Endothelial cell of umbilical vein (primary cell): ENCODE measurements at regions of chr13 and their contacts with region 1.

Region 1: GRCh38 chr13:49146950-49147355 is 73.2 kb upstream of the MLNR start:
- DNase-seq: peak; percentile 85
- H3K4me3 ChIP-seq: peak overlapping the region; percentile 10 to 84 (median 79)
- H3K27ac ChIP-seq: peak overlapping the region; percentile 85
- H3K4me1 ChIP-seq: peaks cover 20% of the 10 kb centered on the region
- H3K27me3 ChIP-seq: no peaks in the 10 kb centered on the region
- CTCF ChIP-seq: no peak
- POLR2A ChIP-seq: no peak

Region 2: DNA sequence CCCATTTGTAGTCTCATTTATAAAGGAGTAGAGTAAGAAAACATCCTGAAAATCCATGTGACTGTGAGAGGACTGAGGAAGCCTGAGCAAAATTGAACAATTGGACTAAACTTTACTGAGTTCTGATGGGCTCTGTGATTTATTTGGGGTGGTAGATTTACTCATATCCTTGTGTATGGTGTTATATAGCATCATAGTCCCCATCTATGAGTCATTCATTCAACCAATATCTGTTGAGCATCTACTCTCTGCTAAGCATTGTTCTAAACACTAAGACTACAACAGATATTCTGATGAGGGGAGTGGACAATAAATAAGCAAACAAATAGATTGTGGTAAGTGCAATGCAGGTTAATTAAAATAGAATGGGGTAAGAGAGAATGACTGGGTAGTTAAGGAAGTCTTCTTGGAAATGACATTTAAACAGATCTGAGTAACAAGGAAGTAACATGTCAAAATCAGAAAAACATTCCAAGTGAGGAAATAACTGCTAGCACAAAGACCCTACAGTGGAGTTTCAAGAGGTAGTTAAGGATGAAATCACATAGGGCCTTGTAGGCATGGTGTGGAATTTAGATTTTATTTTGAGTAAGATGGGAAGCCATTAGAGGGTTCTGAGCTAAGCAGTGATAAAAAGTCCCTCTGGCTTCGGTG is 36.8 kb after region 1 on chr13:
- CTCF ChIA-PET with region 1: interaction called, 3 read pairs
- POLR2A ChIA-PET with region 1: no interaction called
- dilution Hi-C with region 1: no loop called
- intact Hi-C with region 1: loop called (anchors 5 kb)
- DNase-seq: peak; percentile 47
- H3K4me3 ChIP-seq: no peak overlapping the region
- H3K27ac ChIP-seq: no peak overlapping the region
- H3K4me1 ChIP-seq: peaks cover 17% of the 10 kb centered on the region
- H3K27me3 ChIP-seq: no peaks in the 10 kb centered on the region
- CTCF ChIP-seq: no peak
- POLR2A ChIP-seq: no peak